K562 (cell line): ENCODE measurements at regions of chr2 and their contacts with region 1.

Region 1: GRCh38 chr2:131154071-131154531 is 49.0 kb downstream of the PLEKHB2 start:
- DNase-seq: peak; percentile 78 to 84 (median 81)
- ATAC-seq: peak; percentile 92
- H3K4me3 ChIP-seq: no peak overlapping the region
- H3K27ac ChIP-seq: no peak overlapping the region
- H3K4me1 ChIP-seq: peaks cover 0 to 31% of the 10 kb centered on the region in 2 experiments; a peak in 3 of 5 replicates
- H3K27me3 ChIP-seq: peaks cover 0 to 14% of the 10 kb centered on the region in 2 experiments; a peak in 2 of 5 replicates
- CTCF ChIP-seq: peak; percentile 87 to 92 (median 92)
- EP300 ChIP-seq: no peak
- POLR2A ChIP-seq: no peak
- RAD21 ChIP-seq: peak; percentile 92 to 96

Region 2: DNA sequence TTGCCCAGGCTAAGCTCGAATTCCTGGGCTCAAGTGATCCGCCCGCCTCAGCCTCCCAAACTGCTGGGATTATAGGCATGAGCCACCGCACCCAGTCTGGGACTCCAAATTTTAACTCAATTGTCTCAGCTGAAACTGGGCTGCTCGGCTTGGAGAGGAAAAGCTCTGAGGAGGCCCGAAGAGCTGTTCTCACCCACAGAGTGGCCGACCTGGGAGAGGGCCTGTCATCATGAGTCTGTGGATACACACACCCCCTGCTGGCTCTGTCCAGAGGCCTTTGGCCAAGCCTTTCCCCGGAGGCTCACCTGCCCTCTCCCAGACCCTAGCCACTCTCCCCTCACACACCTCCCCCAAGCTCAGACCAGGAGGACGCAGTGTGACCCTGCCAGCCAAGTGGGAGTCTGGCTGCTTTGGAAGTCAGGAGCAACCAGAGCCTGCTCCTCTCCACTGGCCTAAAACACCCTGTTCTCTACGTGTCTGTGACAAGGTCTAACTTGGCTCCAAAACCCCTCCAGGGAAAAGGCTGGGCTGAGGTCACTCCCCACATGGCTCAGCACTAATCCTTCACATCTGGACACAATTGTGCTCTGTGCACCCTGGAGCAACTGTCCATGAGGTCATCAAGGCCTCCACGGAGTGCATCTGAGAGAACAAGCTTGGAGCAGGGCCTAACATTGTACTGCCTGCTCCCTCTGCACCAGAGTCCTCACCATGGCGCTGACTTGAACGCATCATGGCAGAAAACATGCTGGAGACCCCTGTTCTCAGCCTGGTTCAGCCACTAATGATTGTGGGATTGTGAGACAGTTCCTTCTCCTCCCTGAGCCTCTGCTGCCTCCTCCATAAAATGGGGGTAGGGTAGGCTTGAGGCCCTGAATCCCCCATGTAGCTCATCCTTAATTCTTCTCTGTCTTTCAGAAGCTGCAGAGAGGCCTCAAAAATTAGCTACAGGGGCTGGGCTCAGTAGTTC is 1224.5 kb before region 1 on chr2:
- CTCF ChIA-PET with region 1: no interaction called
- POLR2A ChIA-PET with region 1: no interaction called
- in situ Hi-C with region 1: loop called (anchors 5 kb)
- intact Hi-C with region 1: no loop called
- DNase-seq: no peak
- ATAC-seq: peak; percentile 51; the same call in 2 of the 3 replicates
- H3K4me3 ChIP-seq: no peak overlapping the region
- H3K27ac ChIP-seq: no peak overlapping the region
- H3K4me1 ChIP-seq: no peaks in the 10 kb centered on the region
- H3K27me3 ChIP-seq: peaks cover 0 to 8% of the 10 kb centered on the region in 2 experiments; a peak in 2 of 5 replicates
- CTCF ChIP-seq: no peak
- EP300 ChIP-seq: no peak
- POLR2A ChIP-seq: no peak
- RAD21 ChIP-seq: no peak

Region 3: DNA sequence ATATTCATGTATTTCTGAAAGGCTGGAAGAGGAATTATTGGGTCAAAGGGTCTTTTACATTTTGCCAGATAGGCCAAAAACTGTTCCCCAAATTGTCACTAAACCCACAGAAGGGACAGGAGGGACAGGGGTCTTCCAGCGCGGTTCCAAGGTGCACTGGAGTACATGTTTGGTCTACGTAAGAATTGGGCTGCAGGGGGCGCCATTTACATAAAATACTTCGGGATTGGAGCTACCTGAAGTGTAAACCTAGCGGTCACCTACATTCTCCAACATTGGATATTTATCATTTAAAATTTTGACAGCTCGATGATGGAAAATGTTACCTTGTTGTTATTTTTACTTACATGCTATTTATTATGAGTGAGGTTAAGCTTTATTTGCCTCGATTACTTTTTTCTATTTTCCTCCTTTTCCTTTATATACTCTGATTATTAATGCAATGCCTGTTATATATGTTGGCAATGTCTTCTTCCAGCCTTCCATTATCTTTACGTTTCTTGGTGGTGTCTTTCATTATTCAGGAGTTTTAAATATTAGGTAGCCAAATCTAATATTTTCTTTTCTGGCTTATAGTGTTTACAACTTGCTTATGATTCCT is 1217.7 kb before region 1 on chr2:
- CTCF ChIA-PET with region 1: interaction called, 23 read pairs
- POLR2A ChIA-PET with region 1: no interaction called
- in situ Hi-C with region 1: no loop called
- intact Hi-C with region 1: loop called (anchors 1 kb)
- DNase-seq: peak; percentile 40 to 73 (median 59)
- ATAC-seq: peak; percentile 93
- H3K4me3 ChIP-seq: no peak overlapping the region
- H3K27ac ChIP-seq: no peak overlapping the region
- H3K4me1 ChIP-seq: no peaks in the 10 kb centered on the region
- H3K27me3 ChIP-seq: peaks cover 0 to 4% of the 10 kb centered on the region in 2 experiments; a peak in 3 of 5 replicates
- CTCF ChIP-seq: peak; percentile 59 to 88 (median 75)
- EP300 ChIP-seq: no peak
- POLR2A ChIP-seq: no peak
- RAD21 ChIP-seq: peak; percentile 59 to 73

Region 4: GRCh38 chr2:130261970-130262760 is 891.9 kb before region 1 on chr2:
- CTCF ChIA-PET with region 1: no interaction called
- POLR2A ChIA-PET with region 1: no interaction called
- in situ Hi-C with region 1: no loop called
- intact Hi-C with region 1: no loop called
- DNase-seq: no peak
- ATAC-seq: no peak; the same call in 2 of the 3 replicates
- H3K4me3 ChIP-seq: no peak overlapping the region
- H3K27ac ChIP-seq: no peak overlapping the region
- H3K4me1 ChIP-seq: no peaks in the 10 kb centered on the region
- H3K27me3 ChIP-seq: peaks cover 36 to 55% of the 10 kb centered on the region in 2 experiments
- CTCF ChIP-seq: no peak
- EP300 ChIP-seq: no peak
- POLR2A ChIP-seq: no peak
- RAD21 ChIP-seq: no peak

Region 5: DNA sequence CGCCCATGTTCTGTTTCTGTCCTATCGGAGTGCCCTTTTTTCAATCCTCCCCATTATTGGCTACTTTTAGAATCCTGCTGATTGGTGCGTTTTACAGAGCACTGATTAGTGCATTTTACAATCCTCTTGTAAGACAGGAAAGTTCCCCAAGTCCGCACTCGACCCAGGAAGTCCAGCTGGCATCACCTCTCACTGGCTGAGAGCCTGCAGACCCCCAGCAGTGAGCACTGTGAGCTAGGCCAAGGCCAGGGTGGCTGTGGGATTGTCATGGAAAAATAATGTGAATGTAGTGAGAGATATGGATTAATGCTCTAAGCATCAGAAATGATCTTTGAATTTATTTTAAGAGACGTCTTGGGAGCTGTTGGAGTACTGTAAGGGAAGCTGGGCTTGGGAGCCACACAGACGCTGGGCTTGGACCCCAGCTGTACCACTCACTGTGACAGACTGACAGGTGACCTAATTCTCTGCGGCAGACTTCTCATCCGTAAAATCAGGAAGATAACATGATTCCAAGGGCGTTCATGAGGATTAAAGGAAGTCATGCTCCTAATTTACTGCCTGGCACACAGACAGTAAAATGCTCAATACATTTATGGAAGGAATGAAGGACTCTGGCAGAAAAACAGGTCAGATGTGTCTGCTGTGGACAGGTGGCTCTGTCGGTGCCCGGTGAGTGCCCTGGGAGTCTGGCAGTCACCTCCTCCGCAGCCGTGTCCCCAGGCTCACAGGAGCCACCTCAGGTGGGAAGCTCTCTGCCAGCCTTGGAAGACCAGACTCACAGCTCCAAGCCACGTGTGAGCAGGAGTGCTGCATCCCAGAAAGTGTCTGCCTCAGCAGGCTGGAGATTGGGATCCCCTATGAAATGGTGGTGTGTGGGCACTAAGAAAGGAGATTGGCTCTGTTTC is 166.3 kb before region 1 on chr2:
- CTCF ChIA-PET with region 1: no interaction called
- POLR2A ChIA-PET with region 1: no interaction called
- in situ Hi-C with region 1: no loop called
- intact Hi-C with region 1: no loop called
- DNase-seq: no peak
- ATAC-seq: no peak
- H3K4me3 ChIP-seq: no peak overlapping the region
- H3K27ac ChIP-seq: no peak overlapping the region
- H3K4me1 ChIP-seq: no peaks in the 10 kb centered on the region; a peak in 1 of 5 replicates
- H3K27me3 ChIP-seq: peaks cover 0 to 19% of the 10 kb centered on the region in 2 experiments; a peak in 2 of 5 replicates
- CTCF ChIP-seq: no peak
- EP300 ChIP-seq: no peak
- POLR2A ChIP-seq: no peak
- RAD21 ChIP-seq: no peak

Region 6: GRCh38 chr2:131140581-131140980 is 13.5 kb before region 1 on chr2:
- CTCF ChIA-PET with region 1: no interaction called
- POLR2A ChIA-PET with region 1: no interaction called
- in situ Hi-C with region 1: no loop called
- intact Hi-C with region 1: no loop called
- DNase-seq: no peak
- ATAC-seq: no peak
- H3K4me3 ChIP-seq: no peak overlapping the region
- H3K27ac ChIP-seq: no peak overlapping the region
- H3K4me1 ChIP-seq: peaks cover 0 to 4% of the 10 kb centered on the region in 2 experiments; a peak in 2 of 5 replicates
- H3K27me3 ChIP-seq: no peaks in the 10 kb centered on the region
- CTCF ChIP-seq: no peak
- EP300 ChIP-seq: no peak
- POLR2A ChIP-seq: no peak
- RAD21 ChIP-seq: no peak

Region 7: GRCh38 chr2:131402320-131403039 is 248.4 kb after region 1 on chr2:
- CTCF ChIA-PET with region 1: no interaction called
- POLR2A ChIA-PET with region 1: no interaction called
- in situ Hi-C with region 1: no loop called
- intact Hi-C with region 1: loop called (anchors 10 kb)
- DNase-seq: no peak
- ATAC-seq: no peak; the same call in 2 of the 3 replicates
- H3K4me3 ChIP-seq: no peak overlapping the region
- H3K27ac ChIP-seq: no peak overlapping the region
- H3K4me1 ChIP-seq: no peaks in the 10 kb centered on the region; a peak in 1 of 5 replicates
- H3K27me3 ChIP-seq: peaks cover 23 to 48% of the 10 kb centered on the region in 2 experiments
- CTCF ChIP-seq: no peak
- EP300 ChIP-seq: no peak
- POLR2A ChIP-seq: no peak
- RAD21 ChIP-seq: no peak